AG04449 (cell line): ENCODE measurements at regions of chr1 and their contacts with region 1.

Region 1: GRCh38 chr1:40691538-40692428 is at the start of gene NFYC:
- DNase-seq: peak; percentile 76
- H3K4me3 ChIP-seq: peak within 1 kb of the TSS; percentile 86
- CTCF ChIP-seq: no peak

Region 2: GRCh38 chr1:40668769-40669525 is 22.8 kb before region 1 on chr1:
- CTCF ChIA-PET with region 1: interaction called, 29 read pairs
- POLR2A ChIA-PET with region 1: interaction called, 3 read pairs
- DNase-seq: no peak
- H3K4me3 ChIP-seq: no peak overlapping the region
- CTCF ChIP-seq: peak; percentile 86

Region 3: DNA sequence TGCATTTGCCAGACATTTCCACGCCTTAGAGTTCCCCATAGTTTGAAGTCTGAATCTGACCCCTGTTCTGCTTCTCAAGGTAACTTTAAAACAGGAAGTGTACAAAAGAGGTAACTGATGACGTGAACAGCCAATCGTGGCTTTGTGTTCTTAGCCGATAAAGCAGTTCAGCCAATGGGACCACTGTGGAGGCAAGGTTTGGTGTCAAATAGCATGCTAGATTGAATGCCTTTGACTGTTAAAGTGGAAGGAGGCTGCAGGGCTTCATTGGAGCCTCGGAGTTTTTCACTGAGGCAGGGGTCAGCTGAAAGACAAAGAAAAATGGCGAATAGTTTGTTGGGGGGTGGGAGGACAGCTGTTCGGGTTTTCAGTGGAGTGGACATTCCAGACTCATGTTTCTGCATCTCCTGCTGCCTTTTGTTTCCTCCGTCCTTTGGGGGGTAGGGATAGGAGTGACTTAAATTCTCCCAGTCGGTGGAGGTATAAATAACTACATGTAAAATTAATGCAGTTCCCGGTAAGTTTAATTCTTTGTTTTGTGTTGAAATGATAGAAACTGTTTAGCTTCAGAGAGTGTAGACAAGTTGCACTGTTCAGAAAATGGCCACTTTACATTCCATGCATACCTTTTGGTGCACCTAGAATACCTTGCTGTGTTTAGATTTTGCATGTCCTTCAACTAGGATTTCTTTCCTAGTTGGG is 17.5 kb after region 1 on chr1:
- CTCF ChIA-PET with region 1: interaction called, 5 read pairs
- POLR2A ChIA-PET with region 1: interaction called, 10 read pairs
- DNase-seq: peak; percentile 80
- H3K4me3 ChIP-seq: peak overlapping the region; percentile 68
- CTCF ChIP-seq: no peak